Activated naive CD4-positive, alpha-beta T cell treated with anti-CD3 and anti-CD28 coated beads, Interleukin-2, amount 10 ng/mL, durations not matched to agents 7 days and 5 days (primary cell): ENCODE measurements at regions of chr16 and their contacts with region 1.

Region 1: DNA sequence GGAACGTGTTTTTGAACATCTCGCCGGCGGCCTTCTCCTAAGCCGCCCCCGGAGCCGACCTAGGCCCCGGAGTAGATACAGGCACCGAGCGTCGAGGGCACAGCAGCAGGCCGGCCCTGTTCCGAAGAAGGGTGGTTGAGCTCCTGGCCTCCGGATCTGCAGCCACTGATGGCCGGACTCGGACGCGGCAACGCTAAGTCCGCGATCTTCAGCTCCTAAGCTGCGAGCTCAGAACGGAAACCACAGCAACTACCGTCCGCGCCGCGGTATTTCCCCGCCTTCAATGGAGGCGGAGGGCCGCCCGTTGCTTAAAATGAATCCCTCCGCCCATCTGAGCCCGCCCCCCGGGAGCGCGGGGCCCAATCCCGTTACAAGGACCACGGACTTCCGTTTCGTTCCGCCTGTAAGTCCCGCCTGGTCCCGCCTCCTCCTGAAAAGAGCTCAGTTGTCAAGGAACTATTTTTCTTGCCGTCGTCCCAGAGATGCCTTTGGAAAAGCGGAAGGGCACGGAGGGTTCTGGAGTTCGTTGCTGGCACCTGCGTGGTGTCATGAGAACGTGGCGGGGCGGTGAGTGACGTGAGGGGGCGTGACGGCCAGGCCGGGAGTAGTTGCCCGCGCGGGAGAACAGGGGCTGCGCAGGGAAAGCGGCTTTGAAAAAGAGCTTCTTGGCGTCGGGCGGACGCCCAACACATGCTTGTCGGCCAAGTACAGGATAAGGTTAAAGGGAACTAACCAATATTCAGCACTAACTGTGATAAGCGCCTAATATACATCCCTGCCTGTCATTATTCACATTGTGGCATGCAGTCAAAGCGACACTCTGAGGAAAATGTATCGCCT is at the start of gene CFAP20:
- DNase-seq: peak; percentile 98
- H3K4me3 Mint-ChIP-seq: peak within 1 kb of the TSS; percentile 78
- H3K27ac Mint-ChIP-seq: peak within 1 kb of the TSS; percentile 53
- H3K4me1 Mint-ChIP-seq: peaks cover 42% of the 10 kb centered on the region
- H3K27me3 Mint-ChIP-seq: no peaks in the 10 kb centered on the region

Region 2: GRCh38 chr16:58022601-58023371 is 106.5 kb before region 1 on chr16:
- CTCF ChIA-PET with region 1: interaction called, 12 read pairs
- DNase-seq: no peak
- H3K4me3 Mint-ChIP-seq: no peak overlapping the region
- H3K27ac Mint-ChIP-seq: no peak overlapping the region
- H3K4me1 Mint-ChIP-seq: peaks cover 19% of the 10 kb centered on the region
- H3K27me3 Mint-ChIP-seq: peaks cover 38% of the 10 kb centered on the region

Region 3: DNA sequence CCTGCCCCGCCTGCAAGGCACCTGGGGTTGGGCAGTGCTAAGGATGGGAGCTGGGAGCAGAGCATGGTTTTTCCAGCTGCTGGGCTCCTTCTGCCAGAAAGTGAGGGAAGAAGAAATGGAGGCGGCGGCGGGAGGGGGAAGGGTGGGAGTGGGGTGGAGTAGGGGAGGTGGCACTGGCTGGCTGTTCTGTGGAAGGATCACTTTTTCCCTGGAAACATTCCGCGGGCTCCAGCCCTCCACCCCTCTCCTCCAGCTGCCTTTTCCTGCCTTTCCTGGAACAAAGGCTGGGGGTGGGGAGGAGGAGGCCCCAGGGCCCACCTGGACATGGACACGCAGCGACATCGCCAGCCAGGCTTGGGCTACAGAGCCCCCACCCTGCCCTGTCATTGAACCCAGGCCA is 41.2 kb before region 1 on chr16:
- CTCF ChIA-PET with region 1: no interaction called
- DNase-seq: no peak
- H3K4me3 Mint-ChIP-seq: no peak overlapping the region
- H3K27ac Mint-ChIP-seq: no peak overlapping the region
- H3K4me1 Mint-ChIP-seq: no peaks in the 10 kb centered on the region
- H3K27me3 Mint-ChIP-seq: peaks cover 4% of the 10 kb centered on the region

Region 4: DNA sequence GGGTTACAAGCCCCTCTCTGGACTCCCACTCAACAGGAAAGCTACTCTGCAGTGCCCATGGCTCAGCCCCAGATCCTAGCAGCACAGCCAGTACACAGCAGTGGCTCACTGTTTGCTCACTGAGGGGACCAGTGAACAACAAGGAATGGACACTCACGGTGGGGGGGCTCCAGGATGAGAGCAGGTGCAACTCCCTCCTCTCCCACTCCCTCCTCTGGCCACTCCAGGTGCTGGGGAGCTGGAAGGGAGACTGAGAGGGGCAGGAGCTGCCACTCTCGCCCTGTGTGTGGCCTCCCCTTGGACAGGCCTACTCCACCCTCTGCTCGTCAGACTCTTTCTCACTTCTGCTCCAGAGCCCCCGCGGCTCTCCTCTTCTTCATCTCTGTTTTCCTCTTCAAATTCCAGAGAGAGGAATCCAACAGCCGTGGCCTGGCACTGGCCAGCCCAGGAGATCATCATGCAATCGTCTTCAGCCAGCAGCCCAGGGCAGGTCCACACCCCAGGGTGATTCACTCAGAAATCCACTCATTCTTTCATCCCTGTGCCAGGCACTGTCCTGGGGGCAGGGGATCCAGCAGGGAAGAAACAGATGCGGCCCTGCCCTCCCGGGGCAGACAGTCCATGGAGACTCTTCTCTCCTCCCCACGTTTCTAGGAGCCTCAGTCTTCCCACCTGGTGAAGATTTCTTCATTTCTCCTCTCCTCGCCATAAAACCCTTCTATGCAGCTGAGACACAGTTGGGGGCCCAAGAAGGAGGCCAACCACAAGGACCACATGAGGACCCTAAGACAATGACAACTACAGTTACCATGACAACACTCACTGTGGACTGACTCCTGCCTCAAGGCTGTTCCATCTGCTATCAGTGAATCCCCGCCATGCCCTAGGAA is 30.9 kb before region 1 on chr16:
- CTCF ChIA-PET with region 1: interaction called, 30 read pairs
- DNase-seq: no peak
- H3K4me3 Mint-ChIP-seq: no peak overlapping the region
- H3K27ac Mint-ChIP-seq: no peak overlapping the region
- H3K4me1 Mint-ChIP-seq: peaks cover 9% of the 10 kb centered on the region
- H3K27me3 Mint-ChIP-seq: peaks cover 19% of the 10 kb centered on the region